Heart left ventricle (tissue), 16 donors: ENCODE measurements at regions of chr20 and their contacts with region 1.

Region 1: DNA sequence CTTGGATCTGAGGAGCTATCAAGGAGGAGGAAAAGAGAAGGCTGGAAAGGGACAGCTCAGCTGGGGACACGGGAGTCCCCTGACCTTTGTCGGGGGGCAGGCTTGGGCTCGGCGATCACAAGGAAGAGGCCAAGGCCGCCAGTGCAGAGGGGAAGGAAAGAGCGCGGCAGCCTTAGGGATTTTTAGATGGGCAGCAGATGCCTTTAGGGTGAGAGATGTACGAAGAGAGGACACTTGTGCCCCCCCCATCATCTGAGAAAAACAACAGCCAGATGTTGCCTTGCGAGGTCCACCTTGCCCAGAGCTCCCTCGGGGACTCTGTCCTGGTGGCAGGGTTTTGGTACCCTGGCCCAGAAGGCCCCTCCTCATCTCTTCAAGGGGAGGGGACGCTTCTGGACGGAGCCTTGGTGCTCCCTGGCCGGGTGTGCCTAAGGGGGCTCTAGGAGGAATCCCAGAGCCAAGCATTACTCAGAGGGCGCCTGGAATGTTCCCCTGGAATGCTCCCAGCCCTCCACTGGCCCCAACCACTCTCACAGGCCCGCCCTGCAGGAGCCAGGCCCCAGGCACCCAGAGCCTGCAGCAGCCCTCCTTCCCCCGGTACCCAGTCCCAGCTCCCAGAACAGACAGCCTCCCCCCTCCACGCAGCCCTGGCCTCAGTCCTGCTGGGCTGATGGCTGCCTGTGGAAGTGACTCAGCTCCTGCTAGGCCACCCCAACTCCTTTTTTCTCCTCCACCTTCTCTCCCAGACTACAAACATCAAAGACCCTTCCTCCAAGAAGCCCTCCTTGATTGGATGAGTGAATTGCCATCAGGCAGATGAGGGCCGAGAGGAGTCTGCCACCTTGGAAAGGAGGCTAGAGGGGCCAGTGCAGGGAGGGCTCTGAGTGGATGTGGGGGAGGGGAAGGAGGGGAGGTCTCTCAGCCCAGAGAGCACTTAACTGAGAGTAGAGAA is 1.8 kb downstream of the ADAM33 start:
- DNase-seq: peak in 3 of 5 donors; percentile 67 to 71 (median 71)
- ATAC-seq: peak; percentile 13 to 68 (median 36)
- H3K4me3 ChIP-seq: peak overlapping the region in 9 of 12 donors; percentile 52 to 71 (median 58)
- H3K27ac ChIP-seq: peak overlapping the region in 10 of 12 donors; percentile 20 to 92 (median 66)
- H3K4me1 ChIP-seq: peaks cover 0 to 53% (median 24%) of the 10 kb centered on the region in 12 donors
- H3K27me3 ChIP-seq: peaks cover 0 to 42% (median 14%) of the 10 kb centered on the region in 9 donors
- CTCF ChIP-seq: no peak
- POLR2A ChIP-seq: no peak

Region 2: GRCh38 chr20:3621111-3621510 is 58.9 kb before region 1 on chr20:
- intact Hi-C with region 1: no loop called
- DNase-seq: no peak
- ATAC-seq: no peak
- H3K4me3 ChIP-seq: no peak overlapping the region
- H3K27ac ChIP-seq: no peak overlapping the region
- H3K4me1 ChIP-seq: peaks cover 0 to 4% (median 0%) of the 10 kb centered on the region in 12 donors
- H3K27me3 ChIP-seq: no peaks in the 10 kb centered on the region
- CTCF ChIP-seq: no peak
- POLR2A ChIP-seq: no peak

Region 3: DNA sequence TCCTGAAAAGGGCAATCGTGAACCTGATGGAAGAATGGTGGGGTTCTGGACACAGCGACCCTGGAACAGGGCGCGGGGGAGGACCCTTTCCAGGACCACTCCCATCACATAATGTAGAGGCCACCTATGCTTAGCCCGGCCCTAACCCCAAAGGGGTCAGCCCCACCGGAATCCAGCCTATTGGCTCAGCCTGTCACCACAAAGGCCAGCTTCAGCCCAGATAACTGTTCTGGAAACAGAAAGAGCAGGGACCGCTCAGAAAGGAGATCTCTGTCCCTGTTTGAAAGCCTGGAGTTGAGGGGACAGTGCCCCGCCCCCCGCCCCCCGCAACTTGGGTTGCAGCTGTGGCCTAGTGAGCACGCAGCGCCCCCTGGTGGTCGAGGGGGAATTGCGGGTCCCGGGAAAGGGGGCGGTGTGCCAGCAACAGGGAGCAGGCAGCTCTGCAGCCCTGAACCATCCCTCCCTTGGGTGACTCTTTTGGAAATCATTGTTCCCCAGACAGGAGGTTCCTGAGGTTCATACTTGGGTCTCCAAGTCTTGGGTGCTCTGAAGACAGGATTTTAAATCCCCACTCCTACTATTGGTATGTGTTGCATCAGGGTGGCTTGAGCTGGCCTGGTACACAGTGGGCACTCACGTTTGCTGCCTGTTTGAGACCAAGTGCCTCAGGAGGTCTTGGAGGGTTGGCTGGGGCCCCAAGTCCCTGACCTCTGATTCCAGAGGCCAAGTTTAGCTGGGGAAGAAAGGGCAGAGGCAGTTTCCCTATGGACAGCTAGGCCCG is 30.9 kb after region 1 on chr20:
- intact Hi-C with region 1: loop called (anchors 1 to 2 kb)
- DNase-seq: peak; percentile 68 to 91 (median 79)
- ATAC-seq: peak; percentile 29 to 57 (median 43)
- H3K4me3 ChIP-seq: peak overlapping the region in 6 of 12 donors; percentile 4 to 50 (median 17)
- H3K27ac ChIP-seq: peak overlapping the region in 7 of 12 donors; percentile 13 to 79 (median 30)
- H3K4me1 ChIP-seq: peaks cover 0 to 40% (median 11%) of the 10 kb centered on the region in 12 donors
- H3K27me3 ChIP-seq: no peaks in the 10 kb centered on the region
- CTCF ChIP-seq: peak; percentile 87 to 99 (median 98)
- POLR2A ChIP-seq: no peak

Region 4: DNA sequence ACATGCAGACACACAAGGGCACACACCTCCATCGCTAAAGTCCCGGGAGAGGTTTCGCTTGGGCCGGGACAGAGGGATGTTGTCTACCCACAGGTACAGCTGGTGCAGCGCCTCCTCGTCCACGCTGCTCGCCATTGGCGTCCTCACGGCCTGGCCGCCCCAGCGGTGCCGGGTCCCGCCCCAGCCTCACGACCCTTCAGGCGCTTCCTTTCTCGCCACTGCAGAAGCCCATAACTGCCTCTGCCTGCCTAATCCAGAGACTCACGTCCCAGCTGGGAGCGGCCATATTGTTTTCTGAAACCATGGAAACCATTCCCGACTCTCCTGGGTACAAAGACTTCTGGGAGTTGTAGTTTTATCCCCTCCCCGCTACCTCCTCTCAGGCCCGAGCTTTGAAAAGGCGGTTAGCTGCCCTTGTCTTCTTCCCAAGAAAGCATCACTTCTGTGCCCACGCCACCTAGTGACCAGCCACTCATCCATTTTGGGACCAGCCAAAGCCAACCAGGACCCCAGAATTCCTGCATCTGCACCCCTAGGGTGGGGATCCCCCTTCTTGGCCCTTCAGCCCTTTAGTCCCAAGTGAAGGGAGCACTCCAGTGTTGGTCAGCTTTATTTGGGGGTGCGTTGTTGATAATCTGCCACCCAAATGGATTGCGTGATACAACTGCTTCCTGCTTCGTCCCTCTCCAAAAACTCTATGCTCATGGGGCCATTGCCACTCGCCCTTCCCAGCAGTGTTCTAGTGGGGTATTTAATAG is 101.3 kb after region 1 on chr20 and contains the start of gene SPEF1:
- intact Hi-C with region 1: loop called in 3 of 10 experiments (anchors 5 to 10 kb)
- DNase-seq: peak; percentile 68 to 85 (median 81)
- ATAC-seq: peak; percentile 80 to 90 (median 84)
- H3K4me3 ChIP-seq: peak within 1 kb of the TSS in 11 of 12 donors; percentile 17 to 58 (median 46)
- H3K27ac ChIP-seq: peak within 1 kb of the TSS in 4 of 12 donors; percentile 7 to 52 (median 42)
- H3K4me1 ChIP-seq: peaks cover 4 to 55% (median 42%) of the 10 kb centered on the region in 12 donors
- H3K27me3 ChIP-seq: peaks cover 0 to 5% (median 0%) of the 10 kb centered on the region in 9 donors
- CTCF ChIP-seq: peak in 11 of 12 donors; percentile 21 to 54 (median 39)
- POLR2A ChIP-seq: no peak
- total RNA-seq, gene SPEF1: 0.18 to 0.65 (median 0.30) TPM in 4 of 9 donors, not detected in the others

Region 5: DNA sequence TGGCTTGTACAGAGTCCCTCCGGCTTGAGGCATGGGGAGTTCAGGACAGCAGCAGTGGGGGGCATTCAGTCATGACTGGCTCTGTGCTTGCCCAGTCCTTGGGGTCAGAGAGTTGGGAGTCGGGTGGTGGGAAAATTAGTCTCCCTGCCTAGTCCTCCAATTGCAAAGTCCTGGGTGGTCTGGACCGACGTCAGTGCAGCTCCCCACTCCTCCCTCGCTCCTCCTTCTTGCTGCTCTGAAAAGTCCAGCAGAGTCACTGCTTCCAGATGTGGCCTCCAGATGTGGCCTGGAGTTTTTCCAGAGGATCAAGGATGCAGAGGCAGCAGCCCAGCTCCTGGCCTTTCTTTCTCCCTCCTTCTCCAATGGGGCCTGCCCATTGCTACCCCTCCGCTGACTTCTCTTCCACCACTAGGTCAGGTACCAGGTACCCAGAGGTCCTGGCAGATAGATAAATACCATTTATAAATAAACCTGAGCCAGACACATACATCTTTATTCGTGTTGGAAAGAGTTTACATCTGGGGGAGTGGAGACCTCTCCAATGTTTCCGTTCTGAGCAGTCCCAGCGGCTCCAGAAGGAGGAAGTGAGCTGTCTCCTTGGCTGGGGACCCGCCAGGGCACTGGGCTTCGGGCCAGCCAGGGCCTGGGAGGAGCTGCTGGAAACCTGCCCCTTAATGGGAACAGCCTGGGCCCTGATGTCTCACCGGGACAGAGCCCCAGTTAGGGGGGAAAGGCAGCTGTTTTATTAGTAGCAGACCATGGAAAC is 384.3 kb after region 1 on chr20:
- intact Hi-C with region 1: loop called in 1 of 10 experiments (anchors 5 kb)
- DNase-seq: peak; percentile 94 to 96 (median 95)
- ATAC-seq: peak; percentile 86 to 94 (median 91)
- H3K4me3 ChIP-seq: peak overlapping the region in 1 of 12 donors; percentile 21
- H3K27ac ChIP-seq: peak overlapping the region; percentile 62 to 95 (median 80)
- H3K4me1 ChIP-seq: peaks cover 10 to 86% (median 45%) of the 10 kb centered on the region in 12 donors
- H3K27me3 ChIP-seq: no peaks in the 10 kb centered on the region
- CTCF ChIP-seq: peak in 1 of 12 donors; percentile 19
- POLR2A ChIP-seq: no peak

Region 6: GRCh38 chr20:4091490-4092479 is 411.8 kb after region 1 on chr20:
- intact Hi-C with region 1: loop called in 2 of 10 experiments (anchors 5 to 10 kb)
- DNase-seq: peak; percentile 53 to 80 (median 67)
- ATAC-seq: peak; percentile 39 to 74 (median 70)
- H3K4me3 ChIP-seq: no peak overlapping the region
- H3K27ac ChIP-seq: peak overlapping the region in 1 of 12 donors; percentile 22
- H3K4me1 ChIP-seq: peaks cover 0 to 9% (median 0%) of the 10 kb centered on the region in 12 donors
- H3K27me3 ChIP-seq: no peaks in the 10 kb centered on the region
- CTCF ChIP-seq: peak; percentile 49 to 72 (median 60)
- POLR2A ChIP-seq: no peak

Region 7: DNA sequence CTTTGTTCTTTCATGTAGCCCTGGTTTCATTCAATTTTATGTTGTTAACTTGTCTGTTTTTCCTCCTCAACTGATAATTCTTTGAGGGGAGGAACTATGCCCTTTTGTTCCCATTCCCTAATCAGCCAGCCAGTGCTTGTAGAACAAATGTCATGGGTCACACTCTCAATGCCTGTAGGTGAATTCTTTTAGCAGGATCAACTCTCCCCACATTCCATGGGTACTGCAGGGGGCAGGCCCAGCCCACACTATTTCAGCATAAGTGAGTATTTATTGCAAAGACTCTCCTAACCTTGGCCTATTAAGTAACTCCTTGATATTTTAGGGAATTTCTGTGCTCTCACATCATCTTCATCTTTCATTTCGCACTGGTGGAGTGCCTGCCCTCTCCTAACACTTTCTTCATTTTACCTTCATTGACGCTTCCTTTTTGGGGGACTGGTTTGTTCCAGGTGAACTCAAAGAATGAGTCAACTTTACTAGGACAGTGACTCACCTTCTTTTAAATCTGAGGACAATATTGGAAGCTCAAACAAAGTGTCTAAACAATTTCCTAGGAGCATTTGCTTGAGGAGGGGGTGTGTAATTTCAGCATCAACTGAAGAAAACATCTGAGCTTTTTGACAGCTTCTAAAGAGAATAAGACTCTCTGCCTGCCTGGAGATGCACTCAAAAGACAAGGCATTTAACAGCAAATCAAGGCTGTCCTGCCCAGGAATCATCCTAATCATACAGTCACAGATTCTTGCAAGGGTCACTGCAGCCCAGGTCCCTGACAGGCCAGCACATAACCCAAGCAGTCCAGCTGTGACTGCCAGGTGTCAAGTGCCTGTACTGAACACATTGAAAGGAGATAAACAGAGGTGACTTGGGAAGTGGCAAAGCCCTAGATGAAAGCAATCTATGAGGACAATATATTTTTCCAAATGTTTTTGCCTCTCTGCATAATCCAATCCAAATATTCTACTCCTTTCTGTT is 777.8 kb after region 1 on chr20:
- intact Hi-C with region 1: no loop called
- DNase-seq: peak in 1 of 5 donors; percentile 58
- ATAC-seq: no peak
- H3K4me3 ChIP-seq: no peak overlapping the region
- H3K27ac ChIP-seq: no peak overlapping the region
- H3K4me1 ChIP-seq: peaks cover 0 to 5% (median 0%) of the 10 kb centered on the region in 12 donors
- H3K27me3 ChIP-seq: no peaks in the 10 kb centered on the region
- CTCF ChIP-seq: no peak
- POLR2A ChIP-seq: no peak